PC-9 (cell line): ENCODE measurements at regions of chr5 and their contacts with region 1.

Region 1: DNA sequence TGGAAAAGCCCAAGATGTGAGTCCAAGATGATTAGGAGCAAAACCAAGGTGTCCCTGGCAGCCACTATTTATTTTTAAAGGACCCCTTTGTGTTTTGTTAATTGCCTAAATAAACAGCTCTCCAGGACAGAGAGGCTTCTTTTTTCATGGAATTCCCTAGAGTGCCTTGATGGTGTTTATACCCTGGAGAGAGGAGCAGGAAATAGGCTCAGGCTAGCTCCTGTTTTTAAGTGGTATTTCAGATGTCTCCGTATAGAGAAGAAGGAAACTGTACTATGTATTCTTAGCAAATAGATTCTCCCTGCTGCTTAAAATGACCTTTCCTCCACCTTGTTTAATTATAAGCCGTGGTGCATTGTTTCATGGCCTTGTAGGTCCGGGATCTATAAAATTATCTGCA is 292.4 kb downstream of the CD180 start:
- DNase-seq: no peak
- H3K4me3 ChIP-seq: no peak overlapping the region
- H3K27ac ChIP-seq: no peak overlapping the region
- H3K4me1 ChIP-seq: no peaks in the 10 kb centered on the region
- H3K27me3 ChIP-seq: no peaks in the 10 kb centered on the region
- CTCF ChIP-seq: no peak

Region 2: GRCh38 chr5:66958980-66959641 is 54.9 kb after region 1 on chr5:
- CTCF ChIA-PET with region 1: interaction called, 13 read pairs
- POLR2A ChIA-PET with region 1: no interaction called
- intact Hi-C with region 1: no loop called
- DNase-seq: peak; percentile 8 to 74
- H3K4me3 ChIP-seq: no peak overlapping the region
- H3K27ac ChIP-seq: peak overlapping the region; percentile 68
- H3K4me1 ChIP-seq: peaks cover 47% of the 10 kb centered on the region
- H3K27me3 ChIP-seq: no peaks in the 10 kb centered on the region
- CTCF ChIP-seq: no peak